Heart right ventricle (tissue), 16 donors: ENCODE measurements at regions of chr22 and their contacts with region 1.

Region 1: GRCh38 chr22:34111210-34111824 is 191.0 kb upstream of the LARGE1 start:
- DNase-seq: peak in 1 of 2 donors; percentile 9
- ATAC-seq: peak in 6 of 8 donors; percentile 46 to 73 (median 61)
- H3K4me3 ChIP-seq: no peak overlapping the region
- H3K27ac ChIP-seq: no peak overlapping the region
- H3K4me1 ChIP-seq: no peaks in the 10 kb centered on the region
- H3K27me3 ChIP-seq: peaks cover 0 to 10% (median 5%) of the 10 kb centered on the region in 7 donors
- CTCF ChIP-seq: peak; percentile 34 to 76 (median 74)

Region 2: GRCh38 chr22:34099287-34099686 is 12.0 kb before region 1 on chr22:
- intact Hi-C with region 1: no loop called
- DNase-seq: no peak
- ATAC-seq: no peak
- H3K4me3 ChIP-seq: no peak overlapping the region
- H3K27ac ChIP-seq: no peak overlapping the region
- H3K4me1 ChIP-seq: no peaks in the 10 kb centered on the region
- H3K27me3 ChIP-seq: peaks cover 0 to 13% (median 4%) of the 10 kb centered on the region in 7 donors
- CTCF ChIP-seq: no peak

Region 3: DNA sequence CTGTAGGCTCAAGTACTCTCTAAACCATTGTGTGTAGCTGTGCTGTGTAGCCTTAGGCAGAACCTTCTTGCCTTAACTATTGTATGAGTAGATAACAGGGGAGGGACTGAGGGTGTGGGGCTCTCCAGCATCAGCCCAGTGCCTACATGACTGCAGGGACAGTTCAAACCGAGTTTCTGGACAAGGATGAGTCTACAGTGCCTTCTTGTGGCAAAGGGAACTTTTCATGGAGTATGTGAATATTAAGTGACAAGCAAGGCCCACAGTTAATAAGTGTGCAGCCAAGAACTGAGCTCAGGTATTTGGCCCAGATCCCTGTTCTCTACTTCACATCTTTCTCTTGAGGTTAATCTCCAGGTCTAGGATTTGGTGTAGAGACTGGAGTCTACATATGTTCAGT is 233.4 kb after region 1 on chr22:
- intact Hi-C with region 1: loop called in 1 of 10 experiments (anchors 10 kb)
- DNase-seq: no peak
- ATAC-seq: peak in 4 of 8 donors; percentile 38 to 50 (median 44)
- H3K4me3 ChIP-seq: no peak overlapping the region
- H3K27ac ChIP-seq: no peak overlapping the region
- H3K4me1 ChIP-seq: no peaks in the 10 kb centered on the region
- H3K27me3 ChIP-seq: no peaks in the 10 kb centered on the region
- CTCF ChIP-seq: peak in 5 of 9 donors; percentile 13 to 40 (median 33)